Naive thymus-derived CD4-positive, alpha-beta T cell (primary cell): ENCODE measurements at regions of chr22 and their contacts with region 1.

Region 1: DNA sequence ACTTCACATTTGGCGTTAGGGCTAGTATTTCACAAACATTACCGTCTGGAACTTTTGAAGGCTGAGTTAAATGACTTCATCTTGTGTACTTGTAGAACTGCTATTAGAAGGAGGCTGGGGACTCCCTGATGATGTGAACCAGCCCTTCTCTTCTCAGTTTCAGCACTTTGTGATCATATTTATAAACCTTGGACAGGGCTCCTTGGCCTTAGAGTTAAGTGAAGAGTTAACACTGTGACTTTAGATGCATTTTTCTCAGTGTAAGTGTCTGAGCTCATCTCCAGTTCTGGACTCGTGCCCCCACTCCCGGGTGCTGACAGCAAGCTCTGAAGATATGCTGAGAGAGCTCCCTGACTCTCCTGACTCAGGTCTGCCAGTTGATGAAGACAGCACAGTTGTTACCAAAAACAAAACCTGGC is 8.4 kb downstream of the MIAT start:
- DNase-seq: no peak
- ATAC-seq: no peak
- H3K4me3 ChIP-seq: no peak overlapping the region
- H3K4me3 Mint-ChIP-seq: peak overlapping the region in 1 of 10 donors; percentile 83
- H3K27ac ChIP-seq: no peak overlapping the region
- H3K27ac Mint-ChIP-seq: peak overlapping the region in 6 of 9 donors; percentile 21 to 92 (median 74)
- H3K4me1 ChIP-seq: peaks cover 22 to 34% of the 10 kb centered on the region in 2 donors
- H3K4me1 Mint-ChIP-seq: peaks cover 17 to 73% (median 30%) of the 10 kb centered on the region in 7 donors
- H3K27me3 ChIP-seq: no peaks in the 10 kb centered on the region
- H3K27me3 Mint-ChIP-seq: no peaks in the 10 kb centered on the region

Region 2: DNA sequence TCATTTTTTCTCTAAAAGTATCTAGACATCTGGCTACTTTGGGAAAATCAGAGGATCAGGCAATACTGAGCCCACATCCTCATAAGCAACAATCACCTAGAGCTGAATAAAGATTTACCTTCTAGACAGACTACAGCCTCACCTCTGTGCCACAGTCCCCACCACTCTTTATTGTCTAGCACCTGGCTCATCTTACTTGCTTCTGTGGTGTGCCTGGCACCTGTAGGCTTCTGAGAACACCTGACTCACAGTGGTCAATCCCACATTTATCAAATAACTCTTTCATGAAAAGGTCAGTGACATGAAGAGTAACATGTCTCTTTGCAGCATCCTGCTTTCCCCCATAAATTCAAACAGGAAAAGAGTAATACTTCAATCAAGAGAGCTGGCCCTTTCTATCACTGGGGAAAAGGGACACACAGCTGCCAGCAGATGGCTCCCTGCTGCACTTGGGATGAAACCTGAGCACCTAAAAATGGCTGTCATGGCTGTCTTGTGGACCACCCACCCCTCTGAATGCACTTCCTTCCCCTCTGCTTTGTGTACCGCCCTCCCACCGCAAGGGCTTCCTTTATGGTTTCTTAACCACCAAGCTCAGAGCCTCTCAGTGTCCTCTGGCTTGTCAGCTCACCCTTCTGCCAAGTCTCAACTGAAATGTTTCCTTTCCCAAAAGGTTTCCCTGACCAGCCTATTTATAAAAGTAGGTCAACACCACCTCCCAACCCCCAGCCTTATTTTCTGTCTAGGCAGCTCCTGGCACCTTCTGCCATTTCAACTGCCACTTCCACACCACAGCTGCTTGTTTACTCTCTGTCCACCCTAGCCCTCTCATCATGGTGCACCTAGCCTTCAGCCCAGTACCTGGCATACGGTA is 162.9 kb before region 1 on chr22:
- CTCF ChIA-PET with region 1: interaction called, 20 read pairs
- POLR2A ChIA-PET with region 1: interaction called, 3 read pairs
- intact Hi-C with region 1: loop called (anchors 1 kb)
- DNase-seq: peak; percentile 15 to 60 (median 45)
- ATAC-seq: peak; percentile 95
- H3K4me3 ChIP-seq: no peak overlapping the region
- H3K4me3 Mint-ChIP-seq: peak overlapping the region; percentile 28 to 76 (median 58)
- H3K27ac ChIP-seq: peak overlapping the region; percentile 32
- H3K27ac Mint-ChIP-seq: peak overlapping the region; percentile 28 to 87 (median 65)
- H3K4me1 ChIP-seq: peaks cover 13 to 20% of the 10 kb centered on the region in 2 donors
- H3K4me1 Mint-ChIP-seq: peaks cover 16 to 30% (median 25%) of the 10 kb centered on the region in 7 donors
- H3K27me3 ChIP-seq: no peaks in the 10 kb centered on the region
- H3K27me3 Mint-ChIP-seq: no peaks in the 10 kb centered on the region

Region 3: GRCh38 chr22:26563022-26563421 is 102.8 kb before region 1 on chr22:
- CTCF ChIA-PET with region 1: interaction called, 3 read pairs
- POLR2A ChIA-PET with region 1: no interaction called
- intact Hi-C with region 1: loop called in 1 of 2 experiments (anchors 1 kb)
- DNase-seq: peak in 1 of 9 donors; percentile 14
- ATAC-seq: no peak
- H3K4me3 ChIP-seq: no peak overlapping the region
- H3K4me3 Mint-ChIP-seq: no peak overlapping the region
- H3K27ac ChIP-seq: no peak overlapping the region
- H3K27ac Mint-ChIP-seq: no peak overlapping the region
- H3K4me1 ChIP-seq: peaks cover 0 to 9% of the 10 kb centered on the region in 2 donors
- H3K4me1 Mint-ChIP-seq: peaks cover 5 to 45% (median 19%) of the 10 kb centered on the region in 7 donors
- H3K27me3 ChIP-seq: no peaks in the 10 kb centered on the region
- H3K27me3 Mint-ChIP-seq: no peaks in the 10 kb centered on the region

Region 4: DNA sequence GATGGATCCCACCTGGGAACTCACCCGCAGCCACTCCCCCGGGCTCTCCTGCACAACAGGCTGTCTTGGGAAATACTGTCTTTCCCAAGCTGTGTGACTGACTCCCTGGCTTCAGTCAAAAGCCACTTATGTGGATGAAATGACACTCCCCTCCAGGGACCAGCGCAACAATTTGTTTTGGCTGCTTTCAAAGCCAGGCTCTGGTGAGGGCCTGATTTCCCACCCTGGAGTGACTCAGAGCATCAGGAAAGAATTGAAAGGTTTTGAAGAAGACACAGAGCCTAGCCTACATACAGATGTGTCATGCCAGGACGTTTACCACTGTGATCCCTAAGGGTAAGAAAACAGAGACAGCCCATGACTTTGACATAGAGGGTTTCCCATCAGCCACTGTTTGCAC is 542.1 kb after region 1 on chr22:
- CTCF ChIA-PET with region 1: no interaction called
- POLR2A ChIA-PET with region 1: no interaction called
- intact Hi-C with region 1: no loop called
- DNase-seq: no peak
- ATAC-seq: no peak
- H3K4me3 ChIP-seq: no peak overlapping the region
- H3K4me3 Mint-ChIP-seq: no peak overlapping the region
- H3K27ac ChIP-seq: no peak overlapping the region
- H3K27ac Mint-ChIP-seq: no peak overlapping the region
- H3K4me1 ChIP-seq: no peaks in the 10 kb centered on the region
- H3K4me1 Mint-ChIP-seq: no peaks in the 10 kb centered on the region
- H3K27me3 ChIP-seq: no peaks in the 10 kb centered on the region
- H3K27me3 Mint-ChIP-seq: peaks cover 7 to 42% (median 34%) of the 10 kb centered on the region in 5 donors